Calu3 (cell line): ENCODE measurements at regions of chr7 and their contacts with region 1.

Region 1: GRCh38 chr7:67423065-67423464 is 426.4 kb downstream of the TYW1 start:
- DNase-seq: no peak
- H3K4me3 Mint-ChIP-seq: no peak overlapping the region
- H3K27ac Mint-ChIP-seq: no peak overlapping the region
- H3K4me1 Mint-ChIP-seq: no peaks in the 10 kb centered on the region
- H3K27me3 Mint-ChIP-seq: no peaks in the 10 kb centered on the region
- CTCF ChIP-seq: no peak

Region 2: GRCh38 chr7:69276011-69276729 is 1853.1 kb after region 1 on chr7:
- CTCF ChIA-PET with region 1: interaction called, 16 read pairs
- intact Hi-C with region 1: no loop called
- DNase-seq: no peak
- H3K4me3 Mint-ChIP-seq: no peak overlapping the region
- H3K27ac Mint-ChIP-seq: no peak overlapping the region
- H3K4me1 Mint-ChIP-seq: no peaks in the 10 kb centered on the region
- H3K27me3 Mint-ChIP-seq: no peaks in the 10 kb centered on the region
- CTCF ChIP-seq: no peak